ENCODE measurements at regions of chr7 and their contacts with region 1.

Region 1: DNA sequence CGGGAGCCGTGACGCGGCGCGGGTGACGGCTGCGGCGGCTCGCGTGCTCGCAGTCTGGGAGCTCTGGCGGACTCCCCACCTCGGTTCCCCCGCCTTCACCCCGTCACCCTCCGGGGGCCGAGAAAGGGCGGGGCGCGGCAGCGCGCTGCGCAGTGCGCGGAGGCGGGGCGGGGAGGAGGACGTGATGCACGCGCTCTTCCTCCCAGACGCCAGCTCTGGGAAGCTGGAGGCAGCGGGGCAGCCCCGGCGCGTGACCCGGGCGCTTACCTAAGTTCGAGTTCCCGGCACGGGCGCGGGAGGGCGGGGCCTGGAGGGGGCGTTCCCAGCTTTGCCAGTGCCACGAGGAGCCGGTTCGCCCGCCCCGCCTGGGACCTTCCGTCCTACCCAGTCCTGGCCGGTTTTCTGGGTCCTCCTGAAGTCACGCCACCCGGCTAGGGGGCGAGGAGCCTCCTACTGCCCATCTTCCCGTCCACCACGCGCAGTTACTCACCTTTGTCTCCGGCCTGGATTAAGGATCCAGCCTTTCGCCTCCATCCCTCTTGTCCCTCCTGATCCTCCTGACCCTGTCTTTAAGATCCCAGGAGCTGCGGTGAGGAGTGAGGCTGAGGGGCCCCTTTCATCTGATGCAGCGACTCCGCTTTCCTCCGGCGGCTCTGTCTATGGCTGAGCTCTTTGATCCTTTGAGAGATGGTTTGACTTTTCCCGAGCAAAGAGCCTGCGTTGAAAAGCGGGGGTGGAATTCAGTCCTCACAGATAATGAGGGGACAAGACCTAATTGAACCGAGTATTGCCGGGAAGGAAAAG is 470 bp upstream of the NAMPT start:
- DNase-seq: peak; percentile 92 to 99 (median 96)
- ATAC-seq: peak; percentile 94
- H3K4me3 ChIP-seq: peak overlapping the region; percentile 94
- H3K4me3 Mint-ChIP-seq: peak overlapping the region; percentile 91 to 99 (median 96)
- H3K27ac ChIP-seq: peak overlapping the region; percentile 94
- H3K27ac Mint-ChIP-seq: peak overlapping the region; percentile 84 to 99 (median 98)
- H3K4me1 ChIP-seq: peaks cover 9 to 10% of the 10 kb centered on the region in 2 donors
- H3K4me1 Mint-ChIP-seq: peaks cover 17 to 46% (median 33%) of the 10 kb centered on the region in 7 donors
- H3K27me3 ChIP-seq: no peaks in the 10 kb centered on the region
- H3K27me3 Mint-ChIP-seq: peaks cover 0 to under 1% (median 0%) of the 10 kb centered on the region in 5 donors

Region 2: GRCh38 chr7:105013221-105013815 is 1271.9 kb before region 1 on chr7:
- CTCF ChIA-PET with region 1: no interaction called
- POLR2A ChIA-PET with region 1: interaction called, 4 read pairs
- intact Hi-C with region 1: loop called in 1 of 2 experiments (anchors 2 kb)
- DNase-seq: peak; percentile 93 to 98 (median 96)
- ATAC-seq: peak; percentile 68
- H3K4me3 ChIP-seq: peak overlapping the region; percentile 99
- H3K4me3 Mint-ChIP-seq: peak overlapping the region; percentile 96 to 100 (median 98)
- H3K27ac ChIP-seq: peak overlapping the region; percentile 97
- H3K27ac Mint-ChIP-seq: peak overlapping the region; percentile 99 to 100 (median 100)
- H3K4me1 ChIP-seq: peaks cover 14 to 24% of the 10 kb centered on the region in 2 donors
- H3K4me1 Mint-ChIP-seq: peaks cover 31 to 50% (median 41%) of the 10 kb centered on the region in 7 donors
- H3K27me3 ChIP-seq: no peaks in the 10 kb centered on the region
- H3K27me3 Mint-ChIP-seq: peaks cover 0 to 8% (median 0%) of the 10 kb centered on the region in 5 donors

Region 3: DNA sequence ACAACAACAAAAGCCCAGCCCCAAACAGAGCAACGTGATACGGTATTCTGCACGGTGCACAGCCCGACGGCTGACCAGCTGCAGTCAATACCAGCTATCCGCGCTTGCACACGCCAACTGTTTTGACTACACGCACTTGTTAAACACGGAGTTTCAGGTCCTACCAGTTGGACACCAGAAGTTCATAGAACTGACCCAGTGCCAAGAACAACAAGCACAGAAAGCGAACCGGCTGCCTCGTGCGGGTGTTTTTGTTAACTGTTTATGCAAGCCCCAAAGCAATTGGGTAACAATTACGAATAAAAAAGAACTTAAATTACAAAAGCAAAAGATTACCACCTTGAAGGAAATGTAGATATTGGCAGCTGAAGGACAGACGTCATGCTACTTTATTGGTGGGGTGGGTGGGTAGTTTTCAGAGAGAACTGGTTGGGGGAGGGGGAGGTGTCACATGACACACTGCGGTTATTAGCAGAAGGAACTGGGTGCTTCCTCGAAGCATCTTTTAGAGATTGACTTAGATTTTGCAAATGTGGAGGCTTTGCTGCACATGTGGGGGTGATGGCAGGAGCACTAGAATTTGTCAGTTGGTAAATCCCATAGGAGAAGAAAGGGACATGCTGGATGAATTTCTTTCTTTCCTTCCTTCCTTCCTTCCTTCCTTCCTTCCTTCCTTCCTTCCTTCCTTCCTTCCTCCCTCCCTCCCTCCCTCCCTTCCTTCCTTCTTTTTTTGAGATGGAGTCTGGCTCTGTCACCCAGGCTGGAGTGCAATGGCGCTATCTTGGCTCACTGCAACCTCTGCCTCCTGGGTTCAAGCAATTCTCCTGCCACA is 593.3 kb before region 1 on chr7:
- CTCF ChIA-PET with region 1: no interaction called
- POLR2A ChIA-PET with region 1: no interaction called
- intact Hi-C with region 1: loop called in 1 of 2 experiments (anchors 2 kb)
- DNase-seq: peak; percentile 22 to 94 (median 90)
- ATAC-seq: peak; percentile 89
- H3K4me3 ChIP-seq: peak overlapping the region; percentile 94
- H3K4me3 Mint-ChIP-seq: peak overlapping the region; percentile 84 to 98 (median 92)
- H3K27ac ChIP-seq: peak overlapping the region; percentile 83
- H3K27ac Mint-ChIP-seq: peak overlapping the region; percentile 95 to 100 (median 99)
- H3K4me1 ChIP-seq: peaks cover 19 to 21% of the 10 kb centered on the region in 2 donors
- H3K4me1 Mint-ChIP-seq: peaks cover 33 to 78% (median 65%) of the 10 kb centered on the region in 7 donors
- H3K27me3 ChIP-seq: no peaks in the 10 kb centered on the region
- H3K27me3 Mint-ChIP-seq: no peaks in the 10 kb centered on the region

Region 4: GRCh38 chr7:106071356-106071998 is 213.8 kb before region 1 on chr7:
- CTCF ChIA-PET with region 1: no interaction called
- POLR2A ChIA-PET with region 1: interaction called, 7 read pairs
- intact Hi-C with region 1: loop called in 1 of 2 experiments (anchors 10 kb)
- DNase-seq: peak in 8 of 9 donors; percentile 50 to 75 (median 66)
- ATAC-seq: peak; percentile 97
- H3K4me3 ChIP-seq: peak overlapping the region; percentile 70
- H3K4me3 Mint-ChIP-seq: peak overlapping the region; percentile 74 to 84 (median 79)
- H3K27ac ChIP-seq: peak overlapping the region; percentile 80
- H3K27ac Mint-ChIP-seq: peak overlapping the region; percentile 93 to 99 (median 97)
- H3K4me1 ChIP-seq: peaks cover 26 to 49% of the 10 kb centered on the region in 2 donors
- H3K4me1 Mint-ChIP-seq: peaks cover 38 to 75% (median 64%) of the 10 kb centered on the region in 7 donors
- H3K27me3 ChIP-seq: no peaks in the 10 kb centered on the region
- H3K27me3 Mint-ChIP-seq: no peaks in the 10 kb centered on the region

Region 5: DNA sequence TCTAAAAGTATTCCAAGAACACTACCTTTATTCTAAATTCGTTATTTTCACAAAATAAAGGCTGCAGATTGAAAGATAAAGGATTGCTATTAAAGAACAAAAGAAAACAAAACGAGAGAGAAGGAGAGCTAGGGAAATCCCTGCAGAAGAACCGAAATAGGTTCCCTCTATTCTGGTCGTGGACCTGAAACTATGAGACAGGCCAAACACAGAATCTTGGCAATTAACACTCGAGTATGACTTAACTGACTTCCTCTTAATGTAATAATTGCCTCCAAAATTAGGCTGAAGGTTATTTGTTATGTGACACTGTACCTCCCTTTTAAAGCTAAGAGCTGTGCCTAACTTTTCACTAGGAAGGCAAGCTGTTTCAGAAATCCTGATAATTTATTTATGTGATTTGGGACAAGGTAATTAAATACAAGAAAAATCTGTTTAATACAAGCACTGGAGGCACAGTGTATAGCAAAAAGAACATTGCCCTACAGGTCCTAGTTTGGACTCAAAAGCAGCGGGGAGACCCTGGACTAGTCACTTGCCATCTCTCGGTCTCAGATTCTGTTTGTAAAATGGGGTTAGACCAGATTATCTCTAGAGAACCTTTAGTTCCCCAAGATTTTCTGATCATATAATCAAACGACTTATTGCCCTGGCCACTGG is 12.1 kb before region 1 on chr7:
- CTCF ChIA-PET with region 1: no interaction called
- POLR2A ChIA-PET with region 1: no interaction called
- intact Hi-C with region 1: loop called in 1 of 2 experiments (anchors 1 kb)
- DNase-seq: no peak
- ATAC-seq: peak; percentile 6
- H3K4me3 ChIP-seq: no peak overlapping the region
- H3K4me3 Mint-ChIP-seq: no peak overlapping the region
- H3K27ac ChIP-seq: no peak overlapping the region
- H3K27ac Mint-ChIP-seq: no peak overlapping the region
- H3K4me1 ChIP-seq: no peaks in the 10 kb centered on the region
- H3K4me1 Mint-ChIP-seq: peaks cover 0 to 17% (median 3%) of the 10 kb centered on the region in 7 donors
- H3K27me3 ChIP-seq: no peaks in the 10 kb centered on the region
- H3K27me3 Mint-ChIP-seq: no peaks in the 10 kb centered on the region

Region 6: GRCh38 chr7:106598663-106599342 is 313.6 kb after region 1 on chr7:
- CTCF ChIA-PET with region 1: no interaction called
- POLR2A ChIA-PET with region 1: interaction called, 6 read pairs
- intact Hi-C with region 1: loop called in 1 of 2 experiments (anchors 2 kb)
- DNase-seq: peak; percentile 19 to 80 (median 72)
- ATAC-seq: peak; percentile 100
- H3K4me3 ChIP-seq: no peak overlapping the region
- H3K4me3 Mint-ChIP-seq: peak overlapping the region in 8 of 10 donors; percentile 18 to 75 (median 66)
- H3K27ac ChIP-seq: no peak overlapping the region
- H3K27ac Mint-ChIP-seq: peak overlapping the region in 5 of 9 donors; percentile 52 to 69 (median 58)
- H3K4me1 ChIP-seq: no peaks in the 10 kb centered on the region
- H3K4me1 Mint-ChIP-seq: peaks cover 0 to 9% (median 6%) of the 10 kb centered on the region in 7 donors
- H3K27me3 ChIP-seq: no peaks in the 10 kb centered on the region
- H3K27me3 Mint-ChIP-seq: peaks cover 0 to 14% (median 5%) of the 10 kb centered on the region in 5 donors

Region 7: DNA sequence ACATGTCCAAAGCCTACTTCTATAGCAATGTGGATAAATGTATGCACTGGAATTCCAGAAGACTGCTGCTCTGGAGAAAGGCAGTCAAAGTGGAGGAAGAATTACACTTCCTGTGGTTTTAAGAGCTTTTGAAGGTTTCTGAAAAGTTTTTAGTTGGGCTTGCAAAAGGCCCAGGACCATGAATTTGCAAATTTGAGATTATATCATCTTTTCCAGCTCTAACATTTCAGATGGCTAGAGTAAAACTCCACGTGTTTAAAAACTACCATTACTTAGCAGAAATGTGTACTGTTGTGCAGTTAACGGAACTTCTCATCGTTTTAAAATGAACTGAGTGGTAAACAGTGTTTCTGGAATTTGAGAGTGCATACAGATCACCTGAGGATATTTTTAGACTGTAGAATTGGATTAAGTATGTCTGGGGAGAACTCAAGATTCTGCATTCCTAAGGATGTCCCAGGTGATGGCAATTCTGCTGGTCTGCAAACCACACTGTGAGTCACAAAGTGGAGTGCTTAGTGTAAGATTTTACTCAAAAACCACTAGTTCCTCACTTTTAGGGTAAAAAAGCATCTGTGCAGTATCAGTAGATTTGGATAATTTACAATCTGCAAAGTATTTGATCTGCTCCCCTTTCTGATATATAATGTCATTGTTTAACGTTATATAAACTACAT is 408.6 kb after region 1 on chr7:
- CTCF ChIA-PET with region 1: no interaction called
- POLR2A ChIA-PET with region 1: no interaction called
- intact Hi-C with region 1: no loop called
- DNase-seq: no peak
- ATAC-seq: no peak
- H3K4me3 ChIP-seq: no peak overlapping the region
- H3K4me3 Mint-ChIP-seq: no peak overlapping the region
- H3K27ac ChIP-seq: no peak overlapping the region
- H3K27ac Mint-ChIP-seq: no peak overlapping the region
- H3K4me1 ChIP-seq: no peaks in the 10 kb centered on the region
- H3K4me1 Mint-ChIP-seq: peaks cover 5 to 18% (median 6%) of the 10 kb centered on the region in 7 donors
- H3K27me3 ChIP-seq: no peaks in the 10 kb centered on the region
- H3K27me3 Mint-ChIP-seq: no peaks in the 10 kb centered on the region

Region 8: GRCh38 chr7:107044347-107045194 is 759.3 kb after region 1 on chr7 and contains the start of gene PRKAR2B:
- CTCF ChIA-PET with region 1: no interaction called
- POLR2A ChIA-PET with region 1: no interaction called
- intact Hi-C with region 1: loop called in 1 of 2 experiments (anchors 5 kb)
- DNase-seq: peak; percentile 69 to 81 (median 79)
- ATAC-seq: peak; percentile 96
- H3K4me3 ChIP-seq: peak within 1 kb of the TSS; percentile 53
- H3K4me3 Mint-ChIP-seq: peak within 1 kb of the TSS; percentile 78 to 96 (median 90)
- H3K27ac ChIP-seq: peak within 1 kb of the TSS; percentile 33
- H3K27ac Mint-ChIP-seq: peak within 1 kb of the TSS in 7 of 9 donors; percentile 48 to 89 (median 77)
- H3K4me1 ChIP-seq: peaks cover 4 to 10% of the 10 kb centered on the region in 2 donors
- H3K4me1 Mint-ChIP-seq: peaks cover 11 to 19% (median 15%) of the 10 kb centered on the region in 7 donors
- H3K27me3 ChIP-seq: peaks cover 4 to 8% of the 10 kb centered on the region in 2 donors
- H3K27me3 Mint-ChIP-seq: peaks cover 13 to 47% (median 29%) of the 10 kb centered on the region in 5 donors
- total RNA-seq, gene PRKAR2B: 0.43 to 5.0 (median 0.67) TPM

Measured in naive thymus-derived CD4-positive, alpha-beta T cell (primary cell).